GM12878 (cell line): ENCODE measurements at regions of chr11 and their contacts with region 1.

Region 1: GRCh38 chr11:102614485-102614884 is 10.6 kb downstream of the MMP20 start:
- DNase-seq: no peak
- ATAC-seq: 0 out of 3 replicates have a peak, but pooled peaks have one; percentile 3
- H3K4me3 ChIP-seq: no peak overlapping the region
- H3K27ac ChIP-seq: no peak overlapping the region
- H3K4me1 ChIP-seq: peaks cover 18% of the 10 kb centered on the region
- H3K27me3 ChIP-seq: no peaks in the 10 kb centered on the region
- CTCF ChIP-seq: peak; percentile 18 to 55 (median 40); a peak in 5 of 6 replicates
- EP300 ChIP-seq: no peak
- POLR2A ChIP-seq: no peak
- RAD21 ChIP-seq: peak; percentile 80

Region 2: GRCh38 chr11:102099755-102100154 is 514.7 kb before region 1 on chr11:
- CTCF ChIA-PET with region 1: no interaction called
- POLR2A ChIA-PET with region 1: no interaction called
- RAD21 ChIA-PET with region 1: no interaction called
- SMC1A ChIA-PET with region 1: no interaction called
- in situ Hi-C with region 1: no loop called
- intact Hi-C with region 1: no loop called
- DNase-seq: no peak
- ATAC-seq: no peak
- H3K4me3 ChIP-seq: no peak overlapping the region
- H3K27ac ChIP-seq: no peak overlapping the region
- H3K4me1 ChIP-seq: no peaks in the 10 kb centered on the region
- H3K27me3 ChIP-seq: no peaks in the 10 kb centered on the region
- CTCF ChIP-seq: no peak
- EP300 ChIP-seq: no peak
- POLR2A ChIP-seq: no peak
- RAD21 ChIP-seq: no peak

Region 3: GRCh38 chr11:102268329-102269193 is 345.9 kb before region 1 on chr11:
- CTCF ChIA-PET with region 1: interaction called, 11 read pairs
- POLR2A ChIA-PET with region 1: no interaction called
- RAD21 ChIA-PET with region 1: interaction called, 4 read pairs
- SMC1A ChIA-PET with region 1: interaction called, 9 read pairs
- in situ Hi-C with region 1: no loop called
- intact Hi-C with region 1: no loop called
- DNase-seq: peak; percentile 17
- ATAC-seq: peak; percentile 98
- H3K4me3 ChIP-seq: peak overlapping the region; percentile 66
- H3K27ac ChIP-seq: no peak overlapping the region
- H3K4me1 ChIP-seq: no peaks in the 10 kb centered on the region; the same call in 1 of the 2 replicates
- H3K27me3 ChIP-seq: peaks cover 0 to 8% of the 10 kb centered on the region in 2 experiments; a peak in 2 of 4 replicates
- CTCF ChIP-seq: peak in 2 of 3 experiments; percentile 43 to 55; a peak in 4 of 6 replicates
- EP300 ChIP-seq: no peak
- POLR2A ChIP-seq: no peak
- RAD21 ChIP-seq: peak; percentile 30; the same call in 1 of the 2 replicates

Region 4: DNA sequence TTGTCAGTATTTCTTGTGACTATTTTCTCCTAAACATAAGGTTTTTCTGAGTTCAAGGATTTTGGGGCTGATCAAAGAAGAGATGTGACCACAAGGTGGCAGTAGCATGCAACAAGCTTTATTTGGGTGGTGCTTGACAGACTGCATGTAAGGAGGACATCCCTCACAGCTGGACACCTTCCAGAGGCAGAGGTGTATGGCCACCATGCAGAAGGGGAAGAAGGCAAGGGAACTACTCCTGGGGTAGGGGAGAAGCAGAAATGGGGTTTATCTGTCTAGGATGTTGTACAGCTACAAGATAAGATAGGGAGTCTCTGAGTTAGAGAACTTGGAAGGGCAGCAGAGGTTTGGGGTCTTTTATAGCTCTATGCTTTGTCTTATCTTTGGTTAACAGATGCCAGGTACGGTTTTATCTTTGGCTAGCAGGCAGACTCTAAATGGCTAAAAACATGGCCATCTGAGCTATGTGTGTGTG is 272.6 kb before region 1 on chr11:
- CTCF ChIA-PET with region 1: interaction called, 361 read pairs
- POLR2A ChIA-PET with region 1: interaction called, 9 read pairs
- RAD21 ChIA-PET with region 1: interaction called, 308 read pairs
- SMC1A ChIA-PET with region 1: interaction called, 242 read pairs
- in situ Hi-C with region 1: loop called (anchors 5 kb)
- intact Hi-C with region 1: loop called (anchors 1 kb)
- DNase-seq: peak; percentile 76
- ATAC-seq: peak; percentile 67
- H3K4me3 ChIP-seq: no peak overlapping the region
- H3K27ac ChIP-seq: no peak overlapping the region
- H3K4me1 ChIP-seq: no peaks in the 10 kb centered on the region
- H3K27me3 ChIP-seq: no peaks in the 10 kb centered on the region
- CTCF ChIP-seq: peak; percentile 78 to 84 (median 79)
- EP300 ChIP-seq: no peak
- POLR2A ChIP-seq: no peak
- RAD21 ChIP-seq: peak; percentile 94

Region 5: GRCh38 chr11:102410382-102410784 is 204.1 kb before region 1 on chr11:
- CTCF ChIA-PET with region 1: interaction called, 11 read pairs
- POLR2A ChIA-PET with region 1: no interaction called
- RAD21 ChIA-PET with region 1: interaction called, 7 read pairs
- SMC1A ChIA-PET with region 1: interaction called, 3 read pairs
- in situ Hi-C with region 1: no loop called
- intact Hi-C with region 1: no loop called
- DNase-seq: no peak
- ATAC-seq: no peak
- H3K4me3 ChIP-seq: no peak overlapping the region
- H3K27ac ChIP-seq: no peak overlapping the region
- H3K4me1 ChIP-seq: no peaks in the 10 kb centered on the region
- H3K27me3 ChIP-seq: no peaks in the 10 kb centered on the region
- CTCF ChIP-seq: no peak
- EP300 ChIP-seq: no peak
- POLR2A ChIP-seq: no peak
- RAD21 ChIP-seq: no peak

Region 6: DNA sequence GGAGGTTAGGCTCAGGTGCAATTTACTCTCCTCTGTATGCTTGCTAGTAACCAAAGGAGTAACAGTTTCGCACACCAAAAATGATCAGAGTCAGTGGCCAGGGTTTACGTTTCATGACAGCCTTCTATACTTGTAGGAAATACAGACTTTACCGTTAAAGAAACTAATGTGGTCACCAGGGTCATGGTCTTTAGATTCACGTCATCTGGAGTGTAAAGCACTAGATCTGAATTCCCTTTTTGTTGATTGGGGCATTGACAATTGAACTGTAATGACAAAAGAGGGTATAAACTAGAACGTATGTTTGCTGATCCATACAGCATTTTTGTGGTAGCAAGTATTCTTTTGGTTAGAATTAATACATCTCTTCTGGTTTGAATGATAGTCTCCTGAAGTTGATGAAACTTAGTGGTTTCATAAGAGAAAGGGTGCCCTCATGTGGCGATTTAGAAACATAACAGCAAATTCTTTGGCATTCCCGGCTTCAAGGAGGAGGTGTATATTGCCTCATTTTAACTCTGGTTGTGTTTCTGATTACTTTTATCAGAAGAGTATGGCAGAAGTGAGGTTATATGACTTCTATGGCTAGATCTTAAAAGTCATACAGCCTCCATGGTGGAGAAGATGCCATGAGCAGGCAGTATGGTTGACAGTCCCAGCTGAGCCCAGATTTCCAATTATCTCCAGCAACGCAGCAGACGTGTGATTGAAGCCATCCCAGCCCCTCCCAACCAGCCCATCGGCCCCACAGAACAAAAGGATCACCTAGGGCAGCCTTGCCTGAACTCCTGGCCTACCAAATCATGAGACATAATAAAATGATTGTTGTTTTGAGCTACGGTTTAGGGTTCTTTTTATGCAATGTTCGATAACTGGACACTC is 119.1 kb before region 1 on chr11:
- CTCF ChIA-PET with region 1: interaction called, 86 read pairs
- POLR2A ChIA-PET with region 1: interaction called, 13 read pairs
- RAD21 ChIA-PET with region 1: interaction called, 78 read pairs
- SMC1A ChIA-PET with region 1: interaction called, 79 read pairs
- in situ Hi-C with region 1: no loop called
- intact Hi-C with region 1: loop called (anchors 1 kb)
- DNase-seq: peak; percentile 79
- ATAC-seq: peak; percentile 97
- H3K4me3 ChIP-seq: peak overlapping the region; percentile 34; the same call in 1 of the 2 replicates
- H3K27ac ChIP-seq: no peak overlapping the region
- H3K4me1 ChIP-seq: peaks cover 14% of the 10 kb centered on the region
- H3K27me3 ChIP-seq: 0 out of 4 replicates have a peak, but pooled peaks cover 0 to 3% of the 10 kb centered on the region in 2 experiments
- CTCF ChIP-seq: peak; percentile 53 to 78 (median 56); a peak in 5 of 6 replicates
- EP300 ChIP-seq: peak; percentile 67 to 68; a peak in 3 of 4 replicates
- POLR2A ChIP-seq: no peak
- RAD21 ChIP-seq: peak; percentile 90

Region 7: GRCh38 chr11:102553835-102554282 is 60.6 kb before region 1 on chr11:
- CTCF ChIA-PET with region 1: interaction called, 110 read pairs
- POLR2A ChIA-PET with region 1: interaction called, 67 read pairs
- RAD21 ChIA-PET with region 1: interaction called, 143 read pairs
- SMC1A ChIA-PET with region 1: interaction called, 399 read pairs
- in situ Hi-C with region 1: no loop called
- intact Hi-C with region 1: no loop called
- DNase-seq: peak; percentile 78
- ATAC-seq: peak; percentile 85
- H3K4me3 ChIP-seq: no peak overlapping the region
- H3K27ac ChIP-seq: peak overlapping the region; percentile 40; the same call in 1 of the 2 replicates
- H3K4me1 ChIP-seq: peaks cover 40% of the 10 kb centered on the region
- H3K27me3 ChIP-seq: no peaks in the 10 kb centered on the region
- CTCF ChIP-seq: no peak
- EP300 ChIP-seq: peak; percentile 70 to 79; a peak in 3 of 4 replicates
- POLR2A ChIP-seq: no peak
- RAD21 ChIP-seq: peak; percentile 30; the same call in 1 of the 2 replicates